K562 (cell line): ENCODE measurements at regions of chr6 and their contacts with region 1.

Region 1: GRCh38 chr6:29964887-29965562 is 22.7 kb downstream of the HLA-A start:
- DNase-seq: peak; percentile 76 to 98 (median 83)
- ATAC-seq: peak; percentile 87
- H3K4me3 ChIP-seq: peak overlapping the region; percentile 55
- H3K27ac ChIP-seq: peak overlapping the region; percentile 95
- H3K4me1 ChIP-seq: peaks cover 10 to 29% of the 10 kb centered on the region in 2 experiments
- H3K27me3 ChIP-seq: no peaks in the 10 kb centered on the region
- CTCF ChIP-seq: no peak
- EP300 ChIP-seq: peak; percentile 95
- POLR2A ChIP-seq: peak; percentile 97
- RAD21 ChIP-seq: peak in 1 of 2 experiments; percentile 33; a peak in 1 of 4 replicates

Region 2: DNA sequence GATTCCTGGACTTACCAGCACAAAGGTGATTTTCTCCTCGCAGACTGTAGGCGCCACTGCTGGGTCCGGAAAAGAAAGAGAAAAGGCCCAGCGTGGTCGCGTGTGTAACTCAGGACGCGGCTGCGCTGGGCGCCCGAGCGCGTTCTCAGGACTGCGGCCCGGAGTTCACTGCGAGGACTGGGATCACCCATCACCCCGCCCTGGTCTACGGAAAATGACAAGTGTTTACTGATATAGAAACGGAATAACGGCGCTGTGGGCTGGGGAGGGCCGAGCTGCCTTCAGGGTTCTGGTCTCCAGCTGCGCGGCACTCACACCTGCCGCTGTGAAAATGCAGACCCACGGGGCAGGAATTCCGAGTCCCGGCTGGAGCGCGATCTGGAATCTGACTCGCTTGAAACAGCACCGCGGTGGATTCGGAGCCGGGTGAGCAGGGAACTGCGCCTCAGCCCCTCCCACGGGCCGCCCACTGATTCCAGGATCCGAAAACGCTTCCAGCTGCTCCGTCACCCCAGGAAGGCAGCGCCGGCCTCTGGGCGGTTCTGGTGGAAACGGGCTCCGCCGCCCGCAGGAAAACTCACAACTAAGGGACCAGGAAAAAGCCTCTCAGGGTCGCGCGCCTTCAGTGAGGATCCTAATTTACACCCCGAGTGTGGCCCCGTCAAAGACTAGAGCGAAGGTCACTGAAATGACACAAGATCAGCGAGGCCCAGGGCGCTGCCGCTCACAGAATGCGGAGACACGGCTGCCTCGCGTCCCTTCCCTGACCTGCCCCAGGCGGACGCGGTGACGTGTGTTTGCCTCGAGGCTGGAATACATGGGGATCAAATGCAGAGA is 11.8 kb after region 1 on chr6:
- CTCF ChIA-PET with region 1: no interaction called
- POLR2A ChIA-PET with region 1: interaction called, 52 read pairs
- in situ Hi-C with region 1: no loop called
- intact Hi-C with region 1: no loop called
- DNase-seq: peak; percentile 68 to 89 (median 73)
- ATAC-seq: peak; percentile 94
- H3K4me3 ChIP-seq: peak overlapping the region; percentile 47
- H3K27ac ChIP-seq: peak overlapping the region; percentile 76
- H3K4me1 ChIP-seq: peaks cover 10 to 29% of the 10 kb centered on the region in 2 experiments; a peak in 3 of 5 replicates
- H3K27me3 ChIP-seq: no peaks in the 10 kb centered on the region
- CTCF ChIP-seq: peak; percentile 49 to 65 (median 55)
- EP300 ChIP-seq: no peak
- POLR2A ChIP-seq: peak; percentile 74
- RAD21 ChIP-seq: peak; percentile 21 to 52; a peak in 3 of 4 replicates

Region 3: DNA sequence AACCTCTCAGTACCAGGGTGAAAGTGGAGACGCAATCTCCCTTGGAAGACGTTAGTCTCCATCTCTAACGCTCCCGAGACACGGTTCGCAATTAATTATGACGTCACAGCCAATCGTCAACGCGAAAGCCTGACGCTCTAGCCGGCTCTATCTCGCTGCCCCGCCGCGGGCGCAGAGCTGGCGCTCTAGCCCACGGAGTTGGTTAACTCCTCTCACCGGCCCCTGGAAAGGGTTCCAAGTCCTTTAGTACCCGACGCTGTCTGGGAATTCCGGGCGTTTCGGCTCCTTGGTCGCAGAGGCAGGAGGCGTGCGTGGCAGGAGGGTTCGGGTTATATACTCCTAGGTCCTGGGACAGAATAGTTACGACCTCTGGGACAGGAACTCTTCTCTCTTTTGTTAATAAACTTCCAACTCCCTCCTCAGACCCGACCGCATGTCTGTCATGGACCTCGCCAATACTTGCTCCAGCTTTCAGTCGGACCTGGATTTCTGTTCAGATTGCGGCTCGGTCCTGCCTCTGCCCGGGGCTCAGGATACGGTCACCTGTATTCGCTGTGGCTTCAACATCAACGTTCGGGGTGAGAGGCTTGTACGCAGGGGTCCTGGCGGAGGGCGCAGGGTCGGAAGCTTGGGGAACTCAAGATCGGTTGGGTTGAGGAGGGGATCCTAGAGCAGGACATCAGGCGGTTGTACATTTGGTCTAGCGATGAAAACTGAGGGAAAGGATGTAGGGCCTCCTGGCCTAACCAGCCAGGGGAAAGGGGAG is 96.2 kb after region 1 on chr6 and contains the start of gene POLR1H:
- CTCF ChIA-PET with region 1: no interaction called
- POLR2A ChIA-PET with region 1: interaction called, 4 read pairs
- in situ Hi-C with region 1: no loop called
- intact Hi-C with region 1: loop called (anchors 5 kb)
- DNase-seq: peak; percentile 94 to 99 (median 96)
- ATAC-seq: peak; percentile 96
- H3K4me3 ChIP-seq: peak within 1 kb of the TSS; percentile 79
- H3K27ac ChIP-seq: peak within 1 kb of the TSS; percentile 85
- H3K4me1 ChIP-seq: peaks cover 0 to 14% of the 10 kb centered on the region in 2 experiments; a peak in 3 of 5 replicates
- H3K27me3 ChIP-seq: no peaks in the 10 kb centered on the region
- CTCF ChIP-seq: peak in 1 of 3 experiments; percentile 10; a peak in 1 of 6 replicates
- EP300 ChIP-seq: peak; percentile 77
- POLR2A ChIP-seq: peak; percentile 97
- RAD21 ChIP-seq: 0 out of 4 replicates have a peak, but pooled peaks of 1 of the 2 experiments have one; percentile 7
- polyA plus RNA-seq, gene POLR1H: 322 to 333 TPM